PC-9 (cell line): ENCODE measurements at regions of chr1 and their contacts with region 1.

Region 1: DNA sequence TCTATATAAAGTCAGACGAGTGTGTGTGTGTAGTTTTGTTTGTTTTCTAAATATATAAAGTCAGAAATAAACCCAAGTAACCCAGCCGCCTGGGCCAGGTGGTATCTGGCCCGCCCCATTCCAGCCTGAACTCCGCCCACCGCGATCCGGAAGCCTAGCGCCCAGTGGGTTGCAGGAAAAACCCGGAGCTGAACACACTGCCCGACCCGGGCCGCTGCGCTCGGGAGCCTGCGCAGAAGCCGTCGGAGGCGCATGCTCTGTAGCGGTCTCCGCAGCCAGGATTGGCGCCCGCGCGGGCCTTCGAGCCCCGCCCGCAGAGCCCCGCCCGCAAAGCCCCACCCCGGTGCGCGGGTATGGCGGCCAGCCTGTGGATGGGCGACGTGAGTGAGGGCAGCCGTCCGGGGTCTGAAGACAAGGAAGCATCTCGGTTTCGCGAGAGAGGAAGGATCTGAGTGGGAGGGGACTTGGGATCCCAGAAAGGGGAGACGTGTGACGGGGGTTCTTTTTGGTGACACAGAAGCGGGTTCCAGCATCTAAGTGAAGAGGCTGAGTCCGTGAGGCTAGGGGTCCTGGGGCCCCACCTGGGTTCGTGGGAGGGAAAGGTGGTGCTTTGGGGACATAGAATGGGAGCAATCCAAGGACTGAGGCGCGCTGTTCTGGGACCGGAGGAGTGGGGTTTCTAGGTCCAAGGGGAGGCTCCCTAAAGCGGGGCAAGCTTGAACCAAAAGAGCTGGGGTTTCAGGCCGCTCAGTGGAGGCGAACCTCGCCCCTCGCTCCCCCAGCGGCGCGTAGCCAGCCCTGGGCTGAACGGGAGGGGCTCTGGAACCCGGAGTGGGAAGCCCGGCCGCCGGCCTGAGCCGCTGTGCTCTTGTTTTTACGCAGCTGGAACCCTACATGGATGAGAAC is at the start of gene TRNAU1AP:
- DNase-seq: peak; percentile 82 to 97
- H3K4me3 ChIP-seq: peak within 1 kb of the TSS; percentile 63
- H3K27ac ChIP-seq: peak within 1 kb of the TSS; percentile 62
- H3K4me1 ChIP-seq: peaks cover 6% of the 10 kb centered on the region
- H3K27me3 ChIP-seq: no peaks in the 10 kb centered on the region
- CTCF ChIP-seq: no peak
- total RNA-seq, gene TRNAU1AP: 31.7 and 43.0 TPM in 2 replicates

Region 2: DNA sequence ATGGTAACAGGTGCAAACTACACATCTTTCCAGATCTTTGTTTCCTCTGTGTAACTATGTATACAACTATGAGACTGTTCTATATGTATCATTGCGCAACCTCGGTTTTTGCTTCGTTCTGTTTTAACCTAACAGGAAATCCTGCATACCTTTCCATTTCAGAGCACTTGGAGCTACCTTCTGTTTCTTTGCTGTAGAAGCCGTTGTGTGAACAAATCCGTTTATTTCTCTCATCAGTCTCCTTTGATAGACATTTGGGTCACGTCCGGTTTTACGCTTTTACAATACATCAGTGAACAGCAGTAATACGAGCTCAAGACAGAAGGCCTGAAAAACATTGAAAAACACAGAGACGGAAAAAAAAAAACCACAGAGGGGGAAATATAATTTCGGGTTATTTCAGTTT is 306.6 kb before region 1 on chr1:
- CTCF ChIA-PET with region 1: no interaction called
- POLR2A ChIA-PET with region 1: no interaction called
- intact Hi-C with region 1: no loop called
- DNase-seq: peak; percentile 40 to 92
- H3K4me3 ChIP-seq: peak overlapping the region; percentile 76
- H3K27ac ChIP-seq: peak overlapping the region; percentile 79
- H3K4me1 ChIP-seq: peaks cover 31% of the 10 kb centered on the region
- H3K27me3 ChIP-seq: no peaks in the 10 kb centered on the region
- CTCF ChIP-seq: no peak

Region 3: GRCh38 chr1:28374297-28374696 is 178.7 kb before region 1 on chr1:
- CTCF ChIA-PET with region 1: no interaction called
- POLR2A ChIA-PET with region 1: no interaction called
- intact Hi-C with region 1: no loop called
- DNase-seq: peak in 1 of 2 experiments; percentile 36
- H3K4me3 ChIP-seq: no peak overlapping the region
- H3K27ac ChIP-seq: peak overlapping the region; percentile 38
- H3K4me1 ChIP-seq: peaks cover 5% of the 10 kb centered on the region; the same call in 1 of the 2 replicates
- H3K27me3 ChIP-seq: no peaks in the 10 kb centered on the region
- CTCF ChIP-seq: no peak

Region 4: GRCh38 chr1:28526889-28527288 is 26.1 kb before region 1 on chr1:
- CTCF ChIA-PET with region 1: no interaction called
- POLR2A ChIA-PET with region 1: no interaction called
- intact Hi-C with region 1: loop called (anchors 2 kb)
- DNase-seq: peak; percentile 92 to 97
- H3K4me3 ChIP-seq: peak overlapping the region; percentile 19; the same call in 1 of the 2 replicates
- H3K27ac ChIP-seq: peak overlapping the region; percentile 98
- H3K4me1 ChIP-seq: peaks cover 42% of the 10 kb centered on the region
- H3K27me3 ChIP-seq: no peaks in the 10 kb centered on the region
- CTCF ChIP-seq: no peak

Region 5: GRCh38 chr1:28566931-28567330 is 13.9 kb after region 1 on chr1:
- CTCF ChIA-PET with region 1: no interaction called
- POLR2A ChIA-PET with region 1: interaction called, 10 read pairs
- intact Hi-C with region 1: no loop called
- DNase-seq: no peak
- H3K4me3 ChIP-seq: no peak overlapping the region
- H3K27ac ChIP-seq: no peak overlapping the region
- H3K4me1 ChIP-seq: no peaks in the 10 kb centered on the region
- H3K27me3 ChIP-seq: no peaks in the 10 kb centered on the region
- CTCF ChIP-seq: no peak